ENCODE measurements at regions of chr2 and their contacts with region 1.

Region 1: DNA sequence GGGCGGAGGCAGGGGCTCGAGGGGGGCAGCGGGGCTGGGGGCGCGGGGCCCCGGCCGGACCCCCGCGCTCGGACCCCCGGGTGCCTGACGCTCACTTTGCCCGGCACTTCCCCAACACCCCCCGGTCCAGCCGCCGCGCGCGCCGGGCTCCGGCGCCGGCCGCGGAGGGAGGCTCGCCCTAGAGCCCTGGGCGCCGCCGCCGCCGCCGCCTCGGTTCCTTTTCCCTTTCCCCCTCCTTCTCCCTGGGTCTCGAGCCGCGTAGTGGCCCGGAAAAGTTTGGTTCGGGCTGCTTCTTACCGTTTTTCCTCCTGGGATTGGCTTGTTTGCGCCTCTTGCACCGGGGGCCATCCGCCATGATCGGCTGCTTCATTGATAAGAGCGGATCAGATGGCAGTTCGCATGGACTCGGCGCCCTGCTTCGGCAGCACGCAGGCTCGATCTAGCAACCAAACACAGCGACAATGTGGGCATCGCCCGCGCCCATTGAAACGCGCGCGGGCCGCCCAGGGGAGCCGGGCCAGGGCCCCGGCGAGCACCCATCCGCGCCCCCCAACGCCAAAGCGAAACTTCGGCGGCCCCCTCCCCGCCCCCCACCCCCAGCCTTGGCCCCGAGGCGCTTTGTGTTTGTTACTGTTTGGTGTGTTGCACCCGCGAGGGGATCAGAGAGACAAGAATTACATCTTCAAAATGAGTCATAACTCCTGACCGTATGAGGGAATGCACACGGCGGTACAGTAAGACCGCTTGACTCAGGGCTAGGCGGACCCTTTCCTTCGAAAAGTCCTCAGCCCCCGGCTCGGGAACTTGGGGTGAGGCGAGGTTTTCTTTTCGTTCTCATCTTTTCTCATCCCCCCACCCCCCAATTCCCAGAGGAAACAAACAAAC is 2.7 kb downstream of the ZEB2 start:
- DNase-seq: peak; percentile 44
- H3K4me3 Mint-ChIP-seq: no peak overlapping the region
- H3K27ac Mint-ChIP-seq: peak overlapping the region; percentile 100
- H3K4me1 Mint-ChIP-seq: peaks cover 25% of the 10 kb centered on the region
- H3K27me3 Mint-ChIP-seq: peaks cover 43% of the 10 kb centered on the region

Region 2: GRCh38 chr2:143696651-143697050 is 820.6 kb before region 1 on chr2:
- intact Hi-C with region 1: loop called (anchors 2 kb)
- DNase-seq: no peak
- H3K4me3 Mint-ChIP-seq: no peak overlapping the region
- H3K27ac Mint-ChIP-seq: no peak overlapping the region
- H3K4me1 Mint-ChIP-seq: peaks cover 27% of the 10 kb centered on the region
- H3K27me3 Mint-ChIP-seq: no peaks in the 10 kb centered on the region

Region 3: GRCh38 chr2:144256996-144257707 is 260.1 kb before region 1 on chr2:
- intact Hi-C with region 1: loop called (anchors 5 kb)
- DNase-seq: no peak
- H3K4me3 Mint-ChIP-seq: no peak overlapping the region
- H3K27ac Mint-ChIP-seq: peak overlapping the region; percentile 71
- H3K4me1 Mint-ChIP-seq: peaks cover 41% of the 10 kb centered on the region
- H3K27me3 Mint-ChIP-seq: no peaks in the 10 kb centered on the region

Region 4: GRCh38 chr2:144290276-144290675 is 226.9 kb before region 1 on chr2:
- intact Hi-C with region 1: no loop called
- DNase-seq: no peak
- H3K4me3 Mint-ChIP-seq: no peak overlapping the region
- H3K27ac Mint-ChIP-seq: no peak overlapping the region
- H3K4me1 Mint-ChIP-seq: no peaks in the 10 kb centered on the region
- H3K27me3 Mint-ChIP-seq: no peaks in the 10 kb centered on the region

Region 5: GRCh38 chr2:144382849-144383248 is 134.4 kb before region 1 on chr2:
- intact Hi-C with region 1: loop called (anchors 2 kb)
- DNase-seq: peak; percentile 13
- H3K4me3 Mint-ChIP-seq: no peak overlapping the region
- H3K27ac Mint-ChIP-seq: peak overlapping the region; percentile 32
- H3K4me1 Mint-ChIP-seq: peaks cover 44% of the 10 kb centered on the region
- H3K27me3 Mint-ChIP-seq: peaks cover 8% of the 10 kb centered on the region

Region 6: DNA sequence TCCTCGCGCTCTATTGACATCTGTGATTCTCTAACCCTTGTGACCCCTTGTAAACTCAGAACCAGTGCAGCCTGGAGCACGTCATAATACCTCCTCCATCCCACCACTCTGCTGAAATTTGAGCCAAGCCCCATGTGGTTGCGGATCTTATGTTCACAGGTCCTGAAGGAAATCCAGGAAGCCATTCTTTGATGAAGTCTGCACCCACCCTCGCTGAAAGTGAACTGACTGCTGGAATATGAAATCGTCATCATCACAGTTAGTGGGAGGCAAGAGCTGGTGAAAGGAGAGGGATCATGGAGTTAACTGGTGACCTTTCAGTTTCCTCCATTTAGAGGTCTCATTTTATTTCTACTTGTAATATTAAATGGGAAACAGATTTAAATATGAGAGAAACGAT is 18.9 kb before region 1 on chr2:
- intact Hi-C with region 1: loop called (anchors 2 kb)
- DNase-seq: no peak
- H3K4me3 Mint-ChIP-seq: no peak overlapping the region
- H3K27ac Mint-ChIP-seq: no peak overlapping the region
- H3K4me1 Mint-ChIP-seq: peaks cover 16% of the 10 kb centered on the region
- H3K27me3 Mint-ChIP-seq: peaks cover 8% of the 10 kb centered on the region

Region 7: DNA sequence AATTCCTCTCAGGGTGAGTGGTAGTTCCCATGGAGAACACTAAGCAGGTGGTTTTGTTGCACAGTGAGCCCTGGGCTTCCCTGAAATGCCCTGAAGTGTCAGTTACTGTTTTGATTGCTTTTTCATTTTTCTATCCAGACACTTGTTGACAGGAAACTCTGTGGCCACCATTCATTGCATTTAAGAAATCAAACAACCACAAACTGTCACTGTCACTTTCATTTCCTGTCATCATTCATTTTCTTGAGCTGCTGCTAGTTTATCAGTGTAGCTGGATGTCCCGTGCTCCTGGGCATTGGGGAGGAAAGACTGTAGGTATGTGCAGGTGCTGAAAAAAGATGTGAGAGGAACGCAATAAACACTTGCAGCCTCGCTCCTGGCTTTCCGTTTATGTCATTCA is 894.3 kb after region 1 on chr2:
- intact Hi-C with region 1: loop called (anchors 5 kb)
- DNase-seq: peak; percentile 31
- H3K4me3 Mint-ChIP-seq: peak overlapping the region; percentile 12
- H3K27ac Mint-ChIP-seq: peak overlapping the region; percentile 31
- H3K4me1 Mint-ChIP-seq: peaks cover 22% of the 10 kb centered on the region
- H3K27me3 Mint-ChIP-seq: peaks cover 38% of the 10 kb centered on the region

Measured in activated T-helper 1 cell treated with anti-CD3 and anti-CD28 coated beads, Interleukin-12 subunit alpha, Interleukin-12 subunit beta, Interleukin-2, Interleukin-4 antibody, amounts not matched to agents 30 ng/mL and 10 ng/mL and 1 ng/mL, durations not matched to agents 14 hours and 24 hours and 36 hours (primary cell).